ENCODE measurements at regions of chr7 and their contacts with region 1.

Region 1: GRCh38 chr7:99312316-99313203 is 13.1 kb upstream of the ARPC1A start:
- DNase-seq: peak; percentile 60 to 91 (median 76)
- H3K4me3 ChIP-seq: peak overlapping the region in 1 of 4 donors; percentile 33
- H3K27ac ChIP-seq: no peak overlapping the region
- H3K4me1 ChIP-seq: peaks cover 8 to 11% of the 10 kb centered on the region in 2 donors
- H3K27me3 ChIP-seq: no peaks in the 10 kb centered on the region
- CTCF ChIP-seq: peak; percentile 82 to 94 (median 88)
- POLR2A ChIP-seq: no peak

Region 2: DNA sequence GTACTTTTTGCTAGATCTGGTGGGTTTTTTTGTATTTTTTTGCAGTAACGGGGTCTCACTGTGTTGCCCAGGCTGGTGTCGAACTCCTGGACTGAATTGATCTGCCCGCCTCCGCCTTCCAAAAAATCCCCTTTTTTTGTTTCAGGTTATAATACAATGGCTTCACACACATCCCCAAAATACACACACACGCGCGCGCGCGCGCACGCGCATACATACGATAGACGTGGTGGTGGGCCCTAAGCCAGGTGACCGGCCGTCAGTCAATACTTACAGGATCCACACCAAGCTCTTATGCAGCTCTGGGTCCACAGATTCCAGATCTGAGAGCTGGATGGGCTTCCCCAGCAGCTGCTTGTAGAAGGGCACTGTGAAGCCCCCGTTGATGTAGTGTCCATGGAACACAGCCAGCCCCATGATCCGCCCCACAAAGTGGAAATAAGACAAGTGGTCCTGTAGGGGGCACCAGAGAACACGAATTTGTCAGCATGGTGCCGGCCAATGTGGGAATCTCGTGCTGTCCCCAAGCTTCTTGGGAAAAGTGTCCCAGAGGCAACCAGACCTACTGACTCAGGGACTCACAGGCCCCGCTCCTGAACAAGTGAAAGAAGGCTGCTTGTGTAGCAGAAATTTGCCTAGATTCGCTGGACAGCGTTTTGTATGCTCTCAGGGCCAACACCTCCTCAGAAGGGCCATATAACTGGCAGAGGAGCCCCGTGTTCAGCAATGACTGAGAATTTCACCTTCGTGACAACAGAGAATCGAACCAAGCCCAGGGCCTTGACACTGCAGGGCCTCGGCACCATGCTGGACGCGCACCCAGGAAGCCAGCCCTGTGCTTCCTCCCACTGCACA is 272.2 kb before region 1 on chr7:
- intact Hi-C with region 1: loop called (anchors 2 to 5 kb)
- DNase-seq: peak; percentile 88 to 95 (median 93)
- H3K4me3 ChIP-seq: no peak overlapping the region
- H3K27ac ChIP-seq: peak overlapping the region in 4 of 5 donors; percentile 53 to 90 (median 69)
- H3K4me1 ChIP-seq: peaks cover 0 to 43% of the 10 kb centered on the region in 2 donors
- H3K27me3 ChIP-seq: no peaks in the 10 kb centered on the region
- CTCF ChIP-seq: peak; percentile 65 to 88 (median 84)
- POLR2A ChIP-seq: peak in 1 of 2 donors; percentile 39

Region 3: GRCh38 chr7:99571768-99572167 is 259.2 kb after region 1 on chr7:
- intact Hi-C with region 1: no loop called
- DNase-seq: no peak
- H3K4me3 ChIP-seq: no peak overlapping the region
- H3K27ac ChIP-seq: no peak overlapping the region
- H3K4me1 ChIP-seq: no peaks in the 10 kb centered on the region
- H3K27me3 ChIP-seq: no peaks in the 10 kb centered on the region
- CTCF ChIP-seq: no peak
- POLR2A ChIP-seq: no peak